ENCODE measurements at regions of chr15 and their contacts with region 1.

Region 1: GRCh38 chr15:92603743-92604470 is 51.7 kb downstream of the FAM174B start:
- DNase-seq: peak; percentile 78
- H3K4me3 Mint-ChIP-seq: no peak overlapping the region
- H3K27ac Mint-ChIP-seq: no peak overlapping the region
- H3K4me1 Mint-ChIP-seq: peaks cover 16% of the 10 kb centered on the region
- H3K27me3 Mint-ChIP-seq: peaks cover 8% of the 10 kb centered on the region
- CTCF ChIP-seq: no peak

Region 2: GRCh38 chr15:92655178-92655995 is 51.5 kb after region 1 on chr15 and contains the start of gene FAM174B:
- CTCF ChIA-PET with region 1: no interaction called
- POLR2A ChIA-PET with region 1: no interaction called
- intact Hi-C with region 1: loop called (anchors 10 kb)
- DNase-seq: no peak
- H3K4me3 Mint-ChIP-seq: peak within 1 kb of the TSS; percentile 60
- H3K27ac Mint-ChIP-seq: no peak within 1 kb of the TSS
- H3K4me1 Mint-ChIP-seq: peaks cover 4% of the 10 kb centered on the region
- H3K27me3 Mint-ChIP-seq: peaks cover 8% of the 10 kb centered on the region
- CTCF ChIP-seq: no peak
- total RNA-seq, gene FAM174B: 3.5 and 6.5 TPM in 2 replicates